ENCODE measurements at regions of chr2 and their contacts with region 1.

Region 1: GRCh38 chr2:216683846-216684507 is 11.4 kb downstream of the IGFBP5 start:
- DNase-seq: no peak
- ATAC-seq: no peak
- H3K4me3 ChIP-seq: no peak overlapping the region
- H3K27ac ChIP-seq: no peak overlapping the region
- H3K4me1 ChIP-seq: no peaks in the 10 kb centered on the region
- H3K27me3 ChIP-seq: no peaks in the 10 kb centered on the region; a peak in 2 of 4 replicates
- CTCF ChIP-seq: no peak
- EP300 ChIP-seq: no peak
- POLR2A ChIP-seq: no peak
- RAD21 ChIP-seq: no peak

Region 2: GRCh38 chr2:216789081-216789480 is 105.1 kb after region 1 on chr2:
- CTCF ChIA-PET with region 1: no interaction called
- POLR2A ChIA-PET with region 1: no interaction called
- RAD21 ChIA-PET with region 1: no interaction called
- SMC1A ChIA-PET with region 1: no interaction called
- in situ Hi-C with region 1: no loop called
- intact Hi-C with region 1: no loop called
- DNase-seq: no peak
- ATAC-seq: no peak
- H3K4me3 ChIP-seq: no peak overlapping the region
- H3K27ac ChIP-seq: no peak overlapping the region
- H3K4me1 ChIP-seq: no peaks in the 10 kb centered on the region
- H3K27me3 ChIP-seq: no peaks in the 10 kb centered on the region; a peak in 3 of 4 replicates
- CTCF ChIP-seq: no peak
- EP300 ChIP-seq: no peak
- POLR2A ChIP-seq: no peak
- RAD21 ChIP-seq: no peak

Region 3: DNA sequence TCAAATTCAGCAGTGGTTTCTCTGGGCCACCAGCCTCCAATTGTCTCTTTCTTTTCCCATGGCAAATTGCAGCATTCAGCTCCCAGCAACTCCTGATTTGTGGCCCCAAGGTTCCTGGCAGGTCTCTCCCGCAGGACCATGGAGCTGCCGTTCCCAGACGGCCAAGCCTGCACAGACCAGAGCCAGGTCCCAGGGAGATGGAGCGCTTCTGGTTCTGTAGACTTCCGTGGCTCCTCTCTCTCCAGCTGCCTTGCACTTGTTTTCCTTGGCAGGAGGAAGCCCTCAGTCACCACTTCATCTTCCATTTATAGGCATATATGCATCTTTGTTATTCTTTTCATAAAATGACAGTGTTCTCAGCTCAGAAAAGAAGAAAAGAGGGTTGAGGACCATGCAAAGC is 154.2 kb after region 1 on chr2:
- CTCF ChIA-PET with region 1: no interaction called
- POLR2A ChIA-PET with region 1: no interaction called
- RAD21 ChIA-PET with region 1: no interaction called
- SMC1A ChIA-PET with region 1: no interaction called
- in situ Hi-C with region 1: no loop called
- intact Hi-C with region 1: no loop called
- DNase-seq: no peak
- ATAC-seq: no peak
- H3K4me3 ChIP-seq: no peak overlapping the region
- H3K27ac ChIP-seq: no peak overlapping the region
- H3K4me1 ChIP-seq: no peaks in the 10 kb centered on the region
- H3K27me3 ChIP-seq: no peaks in the 10 kb centered on the region; a peak in 2 of 4 replicates
- CTCF ChIP-seq: no peak
- EP300 ChIP-seq: no peak
- POLR2A ChIP-seq: no peak
- RAD21 ChIP-seq: no peak

Region 4: GRCh38 chr2:217756375-217757107 is 1072.6 kb after region 1 on chr2:
- CTCF ChIA-PET with region 1: interaction called, 3 read pairs
- POLR2A ChIA-PET with region 1: no interaction called
- RAD21 ChIA-PET with region 1: no interaction called
- SMC1A ChIA-PET with region 1: no interaction called
- in situ Hi-C with region 1: no loop called
- intact Hi-C with region 1: loop called (anchors 5 kb)
- DNase-seq: no peak
- ATAC-seq: peak; percentile 81
- H3K4me3 ChIP-seq: no peak overlapping the region
- H3K27ac ChIP-seq: no peak overlapping the region
- H3K4me1 ChIP-seq: no peaks in the 10 kb centered on the region
- H3K27me3 ChIP-seq: peaks cover 0 to 2% of the 10 kb centered on the region in 2 experiments; a peak in 1 of 4 replicates
- CTCF ChIP-seq: peak; percentile 50 to 85 (median 75)
- EP300 ChIP-seq: no peak
- POLR2A ChIP-seq: no peak
- RAD21 ChIP-seq: peak; percentile 58

Measured in GM12878 (cell line).